ENCODE measurements at regions of chr12 and their contacts with region 1.

Region 1: GRCh38 chr12:27293463-27293862 is 39.2 kb upstream of the BMAL2 start:
- DNase-seq: no peak
- ATAC-seq: peak in 1 of 2 donors; percentile 68

Region 2: GRCh38 chr12:27014085-27014858 is 279.2 kb before region 1 on chr12 and contains the start of gene TM7SF3:
- intact Hi-C with region 1: loop called in 1 of 2 experiments (anchors 5 kb)
- DNase-seq: peak; percentile 93
- ATAC-seq: peak; percentile 95 to 96
- total RNA-seq, gene TM7SF3: 20.4 to 31.2 TPM

Region 3: DNA sequence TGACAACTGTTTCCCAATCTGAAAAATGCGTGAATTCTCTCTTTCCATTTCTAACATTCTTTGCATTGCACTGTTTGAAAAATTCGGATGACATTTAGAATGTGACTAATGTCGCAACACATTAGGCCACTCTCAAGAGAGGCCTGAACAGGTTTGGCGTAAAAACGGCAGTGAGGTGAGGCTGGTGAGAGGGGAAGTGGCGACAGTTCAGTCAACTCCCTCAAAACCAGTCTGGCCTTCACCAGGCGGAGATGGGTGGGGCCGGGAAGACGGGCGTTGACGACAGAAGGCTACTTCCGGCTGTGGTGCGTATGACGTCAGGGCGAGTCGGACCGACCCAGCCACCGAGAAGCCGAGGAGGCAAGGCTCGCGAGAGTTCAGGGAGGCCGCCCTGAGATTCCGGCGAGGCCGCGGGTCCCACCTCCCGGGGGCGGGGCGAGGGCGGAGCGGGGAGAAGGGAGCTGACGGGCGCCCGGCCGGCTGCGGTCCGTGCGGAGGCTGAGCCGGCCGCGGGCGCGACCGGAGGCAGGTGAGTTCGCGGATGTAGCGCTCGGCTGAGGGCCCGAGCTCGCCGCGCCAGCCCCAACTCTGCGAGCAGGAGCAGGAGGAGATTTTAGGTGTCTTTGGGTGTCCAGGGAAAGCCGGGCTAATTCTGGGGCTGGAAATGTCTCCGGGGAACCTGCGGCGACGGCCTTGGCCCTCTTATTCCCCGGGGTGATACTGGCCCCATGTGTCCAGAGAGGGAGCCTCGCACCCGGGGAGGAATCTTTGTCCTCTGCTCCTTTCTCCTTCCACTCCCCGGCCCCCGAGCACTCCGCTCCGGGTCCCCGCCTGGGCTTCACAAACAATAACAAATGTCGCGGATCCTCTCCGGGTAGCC is 49.4 kb before region 1 on chr12 and contains the start of gene STK38L:
- intact Hi-C with region 1: loop called in 1 of 2 experiments (anchors 5 kb)
- DNase-seq: peak; percentile 98
- ATAC-seq: peak; percentile 99
- total RNA-seq, gene STK38L: 70.6 to 135 TPM

Region 4: DNA sequence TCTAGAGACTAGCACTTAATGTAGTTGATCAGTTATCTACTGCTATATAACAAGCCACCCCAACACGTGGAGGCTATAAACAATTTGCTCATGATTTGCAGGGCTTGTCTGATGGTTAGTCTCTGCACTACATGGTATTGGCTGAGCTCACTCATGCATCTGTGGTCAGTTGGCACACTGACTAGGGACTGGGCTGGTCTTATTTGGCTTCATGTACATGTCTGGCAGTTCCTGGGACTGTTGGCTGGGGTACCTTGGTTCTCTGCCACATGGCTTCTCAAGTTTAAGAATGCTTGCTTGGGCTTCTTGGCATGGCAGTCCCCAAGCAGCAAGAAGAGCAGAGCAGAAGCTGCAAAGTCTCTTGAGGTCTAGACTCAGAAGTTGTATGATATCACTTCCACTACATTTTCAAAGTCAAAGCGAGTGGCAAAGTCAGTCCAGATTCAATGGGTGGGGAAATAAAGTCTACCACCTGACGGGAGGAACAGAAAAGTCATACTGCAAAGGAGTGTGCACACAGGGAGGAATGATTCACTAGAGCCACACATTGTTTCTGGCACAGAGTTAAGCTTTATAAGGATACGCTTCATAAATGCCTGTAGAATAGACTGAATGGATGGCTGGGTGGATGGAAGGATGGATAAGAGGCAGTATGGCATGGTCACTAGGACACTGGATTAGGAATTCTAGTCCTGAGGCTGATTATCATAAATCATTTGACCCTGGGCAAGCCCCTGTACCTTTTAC is 723.8 kb after region 1 on chr12:
- intact Hi-C with region 1: no loop called
- DNase-seq: no peak
- ATAC-seq: no peak